ENCODE measurements at regions of chr1 and their contacts with region 1.

Region 1: DNA sequence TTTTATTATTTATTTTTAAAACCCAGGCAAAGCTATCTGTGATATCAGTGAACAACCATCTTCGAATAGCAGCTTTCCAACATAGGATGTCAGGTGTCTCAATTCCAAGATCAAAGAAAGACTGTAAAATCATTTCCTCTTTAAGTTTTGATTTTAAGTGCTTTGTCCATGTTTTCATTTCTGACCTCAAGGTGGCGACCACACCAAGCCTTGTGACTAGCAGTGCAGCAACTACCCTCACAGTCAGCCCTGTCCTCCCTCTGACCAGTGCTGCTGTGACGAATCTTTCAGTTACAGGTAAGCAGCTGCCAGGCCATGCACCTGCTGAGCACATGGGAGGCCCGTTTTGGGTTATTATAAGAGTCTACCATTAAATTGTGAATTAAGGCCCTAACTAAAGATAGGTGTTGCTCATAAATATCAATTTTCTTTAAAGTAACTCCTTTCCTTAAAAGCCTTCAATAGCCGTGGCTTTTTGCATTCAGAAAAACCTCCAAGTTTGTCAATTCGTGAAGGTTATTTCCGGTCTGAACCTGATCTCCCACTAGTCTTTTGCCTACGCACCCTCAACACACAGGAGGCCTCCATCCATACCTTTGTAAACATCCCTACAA is 117.0 kb downstream of the CD247 start:
- DNase-seq: peak; percentile 64
- ATAC-seq: peak; percentile 71
- H3K4me3 Mint-ChIP-seq: no peak overlapping the region
- H3K27ac Mint-ChIP-seq: no peak overlapping the region
- H3K4me1 Mint-ChIP-seq: no peaks in the 10 kb centered on the region
- H3K27me3 Mint-ChIP-seq: no peaks in the 10 kb centered on the region

Region 2: DNA sequence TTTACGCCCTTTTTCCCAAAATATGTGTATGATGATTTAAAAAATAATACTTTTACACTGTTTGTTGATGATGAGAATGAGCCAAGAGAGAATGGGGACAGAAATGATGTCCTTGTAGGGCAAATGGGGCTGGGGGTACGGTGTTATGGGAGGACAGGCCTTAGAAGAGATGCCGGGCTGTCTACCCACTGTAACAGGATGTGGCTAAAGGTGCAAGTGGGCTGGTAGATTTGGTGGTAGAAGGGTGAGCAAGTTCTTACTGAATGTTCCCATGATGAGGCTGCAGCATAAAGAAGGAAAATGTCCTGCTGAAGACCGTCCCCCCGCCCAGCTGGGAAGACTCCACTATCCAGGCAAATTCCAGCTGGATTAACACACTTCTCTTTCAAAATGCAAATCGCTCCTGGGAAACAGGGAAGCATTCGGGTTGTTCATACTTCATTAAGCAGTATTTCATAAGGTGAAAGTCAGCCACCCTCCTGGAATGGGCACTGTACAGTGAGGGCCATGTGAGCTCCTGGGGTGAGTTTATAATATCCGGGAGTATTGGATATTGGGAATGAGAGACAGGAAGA is 325.1 kb before region 1 on chr1:
- CTCF ChIA-PET with region 1: no interaction called
- POLR2A ChIA-PET with region 1: no interaction called
- intact Hi-C with region 1: no loop called
- DNase-seq: no peak
- ATAC-seq: no peak
- H3K4me3 Mint-ChIP-seq: no peak overlapping the region
- H3K27ac Mint-ChIP-seq: no peak overlapping the region
- H3K4me1 Mint-ChIP-seq: peaks cover 10% of the 10 kb centered on the region
- H3K27me3 Mint-ChIP-seq: no peaks in the 10 kb centered on the region

Region 3: DNA sequence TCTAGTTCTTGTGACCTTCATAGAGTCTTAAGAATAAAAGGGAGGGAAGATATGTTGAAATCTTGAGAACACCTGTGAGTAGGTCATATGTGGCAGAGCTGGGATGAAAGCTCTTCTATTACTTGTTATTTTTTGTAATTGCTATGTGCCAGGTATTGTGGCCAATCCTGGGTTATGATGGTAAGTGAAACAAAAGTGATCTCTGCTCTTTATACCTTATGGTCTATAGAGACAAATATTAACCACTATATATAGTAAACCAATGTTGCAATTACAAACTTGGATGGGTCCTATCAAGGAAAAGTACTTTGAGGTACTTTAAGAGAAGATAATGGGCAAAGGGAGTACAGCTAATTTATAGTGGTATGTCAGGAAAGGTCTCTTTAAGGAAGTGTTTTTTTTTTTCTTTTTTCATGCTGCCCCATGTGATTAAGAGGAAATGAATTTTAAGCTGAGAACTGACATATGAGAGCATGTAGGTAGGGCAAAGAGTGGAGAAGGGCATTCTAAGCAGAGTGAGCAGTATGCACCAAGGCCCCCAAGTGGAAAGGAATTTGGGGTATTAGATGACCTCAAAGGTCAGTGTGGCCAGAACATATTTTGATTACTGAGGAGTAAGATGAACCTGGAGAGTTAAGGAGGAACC is 137.4 kb before region 1 on chr1:
- CTCF ChIA-PET with region 1: interaction called, 4 read pairs
- POLR2A ChIA-PET with region 1: no interaction called
- intact Hi-C with region 1: loop called in 1 of 2 experiments (anchors 10 kb)
- DNase-seq: no peak
- ATAC-seq: peak; percentile 43
- H3K4me3 Mint-ChIP-seq: no peak overlapping the region
- H3K27ac Mint-ChIP-seq: no peak overlapping the region
- H3K4me1 Mint-ChIP-seq: peaks cover 28% of the 10 kb centered on the region
- H3K27me3 Mint-ChIP-seq: no peaks in the 10 kb centered on the region

Region 4: DNA sequence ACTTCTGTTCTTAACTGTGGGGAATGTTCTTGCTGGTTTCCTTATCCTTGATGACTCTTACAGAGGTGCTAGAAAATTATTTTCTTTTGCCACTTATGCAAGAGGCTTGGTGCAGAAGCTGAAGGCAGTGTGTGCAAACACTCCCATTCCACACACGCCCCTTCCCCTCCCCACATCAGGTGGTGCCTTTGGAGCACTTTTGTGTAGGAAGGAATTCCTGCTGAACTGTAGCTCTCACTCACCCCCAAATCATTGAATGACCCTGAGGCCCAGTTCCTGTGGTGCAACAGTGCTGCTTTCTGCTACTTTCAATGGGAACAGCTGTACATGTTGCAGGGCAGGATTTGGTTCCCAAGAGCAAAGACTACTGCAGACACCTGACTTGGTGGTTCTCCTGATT is 15.1 kb after region 1 on chr1:
- CTCF ChIA-PET with region 1: interaction called, 6 read pairs
- POLR2A ChIA-PET with region 1: no interaction called
- intact Hi-C with region 1: loop called in 1 of 2 experiments (anchors 1 kb)
- DNase-seq: no peak
- ATAC-seq: no peak
- H3K4me3 Mint-ChIP-seq: no peak overlapping the region
- H3K27ac Mint-ChIP-seq: no peak overlapping the region
- H3K4me1 Mint-ChIP-seq: peaks cover 18% of the 10 kb centered on the region
- H3K27me3 Mint-ChIP-seq: no peaks in the 10 kb centered on the region

Region 5: GRCh38 chr1:167737169-167737568 is 335.8 kb after region 1 on chr1:
- CTCF ChIA-PET with region 1: no interaction called
- POLR2A ChIA-PET with region 1: no interaction called
- intact Hi-C with region 1: no loop called
- DNase-seq: no peak
- ATAC-seq: no peak
- H3K4me3 Mint-ChIP-seq: no peak overlapping the region
- H3K27ac Mint-ChIP-seq: no peak overlapping the region
- H3K4me1 Mint-ChIP-seq: no peaks in the 10 kb centered on the region
- H3K27me3 Mint-ChIP-seq: no peaks in the 10 kb centered on the region

Measured in activated CD4-positive, alpha-beta T cell treated with anti-CD3 and anti-CD28 coated beads for 36 hours (primary cell).